ENCODE measurements at regions of chr15 and their contacts with region 1.

Region 1: GRCh38 chr15:44426975-44427755 is at the start of gene CTDSPL2:
- DNase-seq: peak; percentile 98
- H3K4me3 ChIP-seq: peak within 1 kb of the TSS; percentile 38 to 79 (median 76)
- H3K27ac ChIP-seq: peak within 1 kb of the TSS; percentile 91 to 97 (median 95)
- H3K4me1 ChIP-seq: peaks cover 3 to 37% (median 30%) of the 10 kb centered on the region in 4 donors
- H3K27me3 ChIP-seq: no peaks in the 10 kb centered on the region
- CTCF ChIP-seq: peak in 3 of 5 experiments; percentile 27 to 50 (median 34)
- EP300 ChIP-seq: no peak
- POLR2A ChIP-seq: peak; percentile 73
- total RNA-seq, gene CTDSPL2: 52.0 to 84.8 (median 62.8) TPM

Region 2: DNA sequence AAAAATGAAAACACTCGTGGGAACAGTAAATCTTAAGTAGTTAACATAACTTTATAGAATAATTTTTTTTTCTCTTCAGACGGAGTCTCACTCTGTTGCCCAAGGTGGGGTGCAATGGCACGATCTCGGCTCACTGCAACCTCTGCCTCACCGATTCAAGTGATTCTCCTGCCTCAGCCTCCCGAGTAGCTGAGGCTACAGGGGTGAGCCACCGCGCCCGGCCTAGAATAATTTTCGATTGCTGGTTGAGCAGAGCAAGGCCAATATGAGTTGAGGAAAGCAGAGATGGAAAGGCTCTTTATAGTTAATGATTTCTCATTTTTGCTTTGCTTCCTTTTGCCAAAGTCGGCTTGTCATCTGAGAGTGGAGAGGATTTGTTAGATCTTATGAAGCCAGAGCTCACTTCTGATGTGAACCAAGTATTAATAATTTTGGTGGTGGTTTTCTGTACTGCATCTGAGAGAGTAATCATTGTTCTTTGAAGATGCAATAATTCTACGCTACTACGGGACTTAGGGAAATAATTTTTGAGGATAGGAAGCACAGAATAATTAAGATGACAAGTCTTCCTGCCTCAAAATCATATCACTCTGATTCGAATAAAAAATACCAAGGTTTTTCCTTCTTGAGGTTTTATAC is 140.2 kb before region 1 on chr15:
- in situ Hi-C with region 1: loop called in 1 of 4 experiments (anchors 10 kb)
- intact Hi-C with region 1: no loop called
- DNase-seq: no peak
- H3K4me3 ChIP-seq: peak overlapping the region in 3 of 4 donors; percentile 56 to 75 (median 62)
- H3K27ac ChIP-seq: peak overlapping the region; percentile 88 to 98 (median 96)
- H3K4me1 ChIP-seq: peaks cover 0 to 35% (median 23%) of the 10 kb centered on the region in 4 donors
- H3K27me3 ChIP-seq: no peaks in the 10 kb centered on the region
- CTCF ChIP-seq: peak in 4 of 5 experiments; percentile 14 to 26 (median 22)
- EP300 ChIP-seq: no peak
- POLR2A ChIP-seq: no peak

Region 3: DNA sequence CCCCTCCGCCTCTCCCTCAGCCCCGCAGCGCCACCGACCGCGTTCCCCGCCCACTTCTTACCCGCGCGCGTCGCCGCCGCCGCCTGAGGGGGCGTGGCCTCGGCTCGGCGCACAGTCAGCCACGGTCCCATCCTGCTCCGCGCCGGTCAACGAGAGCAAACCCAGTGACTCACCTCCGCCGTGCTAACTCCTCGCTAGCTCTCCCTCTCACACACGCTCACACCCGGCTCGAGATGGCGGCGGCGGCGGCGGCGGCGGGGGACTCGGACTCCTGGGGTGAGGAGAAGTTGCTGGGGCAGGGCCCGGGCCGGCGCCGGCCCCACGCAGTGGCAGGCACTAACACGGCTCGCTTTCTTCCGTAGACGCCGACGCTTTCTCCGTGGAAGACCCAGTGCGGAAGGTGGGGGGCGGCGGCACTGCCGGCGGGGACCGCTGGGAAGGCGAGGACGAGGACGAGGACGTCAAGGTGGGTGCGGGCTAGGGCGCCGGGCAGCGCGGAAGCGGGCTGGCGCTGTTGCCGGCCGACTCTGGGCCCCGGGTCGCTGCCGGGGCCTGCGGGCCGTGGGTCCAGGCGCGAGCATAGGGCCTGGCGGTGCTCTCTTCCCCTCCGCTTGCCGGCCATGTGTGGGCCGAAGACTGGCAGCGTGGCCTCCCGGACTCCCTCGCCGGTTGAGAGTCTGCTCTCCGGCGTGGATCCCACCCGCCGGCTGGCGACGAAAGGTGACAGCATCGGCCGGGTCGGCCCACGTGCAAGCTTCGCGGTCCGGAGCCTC is 110.0 kb after region 1 on chr15 and contains the start of gene EIF3J:
- in situ Hi-C with region 1: no loop called
- intact Hi-C with region 1: loop called (anchors 10 kb)
- DNase-seq: peak; percentile 95
- H3K4me3 ChIP-seq: peak within 1 kb of the TSS; percentile 66 to 93 (median 83)
- H3K27ac ChIP-seq: peak within 1 kb of the TSS; percentile 97 to 100 (median 98)
- H3K4me1 ChIP-seq: peaks cover 17 to 44% (median 37%) of the 10 kb centered on the region in 4 donors
- H3K27me3 ChIP-seq: no peaks in the 10 kb centered on the region
- CTCF ChIP-seq: no peak
- EP300 ChIP-seq: no peak
- POLR2A ChIP-seq: peak; percentile 95
- total RNA-seq, gene EIF3J: 27.7 to 55.6 (median 42.2) TPM

Measured in transverse colon (tissue), 4 donors.